ENCODE measurements at regions of chr9 and their contacts with region 1.

Region 1: DNA sequence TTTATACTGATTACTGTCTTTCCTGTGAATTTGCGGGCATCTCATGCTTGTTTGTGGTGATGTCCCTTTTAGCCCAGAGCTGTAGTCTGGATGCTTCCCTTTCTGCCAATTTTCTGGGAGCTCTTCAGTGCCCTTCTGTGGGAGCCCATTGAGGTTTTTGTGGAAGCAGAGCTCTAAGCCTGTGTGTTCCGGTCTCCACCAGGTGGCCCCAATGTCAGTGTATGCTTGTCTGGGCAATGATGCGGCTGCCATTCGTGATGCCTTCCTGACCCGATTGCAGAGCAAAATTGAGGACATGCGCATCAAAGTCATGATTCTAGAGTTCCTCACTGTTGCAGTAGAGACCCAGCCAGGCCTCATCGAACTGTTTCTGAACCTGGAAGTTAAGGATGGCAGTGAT is 35.1 kb downstream of the SH3GLB2 start:
- DNase-seq: no peak
- H3K4me3 ChIP-seq: no peak overlapping the region
- H3K27ac ChIP-seq: no peak overlapping the region
- H3K4me1 ChIP-seq: no peaks in the 10 kb centered on the region
- H3K27me3 ChIP-seq: no peaks in the 10 kb centered on the region
- CTCF ChIP-seq: peak in 1 of 5 experiments; percentile 12
- EP300 ChIP-seq: no peak
- POLR2A ChIP-seq: no peak

Region 2: GRCh38 chr9:128607642-128608350 is 385.2 kb before region 1 on chr9:
- in situ Hi-C with region 1: loop called in 1 of 4 experiments (anchors 25 kb)
- intact Hi-C with region 1: no loop called
- DNase-seq: peak; percentile 27
- H3K4me3 ChIP-seq: no peak overlapping the region
- H3K27ac ChIP-seq: peak overlapping the region in 3 of 4 donors; percentile 23 to 41 (median 33)
- H3K4me1 ChIP-seq: no peaks in the 10 kb centered on the region
- H3K27me3 ChIP-seq: no peaks in the 10 kb centered on the region
- CTCF ChIP-seq: no peak
- EP300 ChIP-seq: no peak
- POLR2A ChIP-seq: no peak

Region 3: GRCh38 chr9:128841711-128842492 is 151.1 kb before region 1 on chr9:
- in situ Hi-C with region 1: no loop called
- intact Hi-C with region 1: loop called (anchors 5 kb)
- DNase-seq: no peak
- H3K4me3 ChIP-seq: no peak overlapping the region
- H3K27ac ChIP-seq: no peak overlapping the region
- H3K4me1 ChIP-seq: no peaks in the 10 kb centered on the region
- H3K27me3 ChIP-seq: no peaks in the 10 kb centered on the region
- CTCF ChIP-seq: no peak
- EP300 ChIP-seq: no peak
- POLR2A ChIP-seq: no peak

Region 4: GRCh38 chr9:128902351-128903078 is 90.5 kb before region 1 on chr9:
- in situ Hi-C with region 1: no loop called
- intact Hi-C with region 1: no loop called
- DNase-seq: peak; percentile 86
- H3K4me3 ChIP-seq: no peak overlapping the region
- H3K27ac ChIP-seq: peak overlapping the region; percentile 65 to 83 (median 73)
- H3K4me1 ChIP-seq: peaks cover 21 to 41% (median 22%) of the 10 kb centered on the region in 4 donors
- H3K27me3 ChIP-seq: no peaks in the 10 kb centered on the region
- CTCF ChIP-seq: no peak
- EP300 ChIP-seq: no peak
- POLR2A ChIP-seq: peak; percentile 78

Region 5: DNA sequence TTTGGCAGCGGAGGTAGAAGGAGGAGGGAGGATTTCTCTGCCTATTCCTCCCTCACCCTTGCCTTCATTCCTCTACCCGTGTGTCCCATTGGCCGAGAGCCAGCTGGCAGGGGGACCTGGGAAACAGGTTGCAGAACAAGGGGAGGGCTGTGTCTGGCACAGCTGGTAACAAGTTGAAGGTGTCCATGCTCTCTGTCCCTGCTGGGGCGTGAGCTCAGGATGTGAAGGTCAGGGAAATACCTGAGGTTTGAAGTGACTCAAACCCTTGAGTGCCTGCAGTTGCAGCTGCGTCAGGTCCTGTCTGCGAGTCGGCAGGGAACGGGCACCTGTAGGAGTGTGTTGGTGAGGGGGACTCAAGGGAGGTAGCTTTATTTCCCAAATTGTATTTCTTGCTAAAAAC is 59.6 kb after region 1 on chr9:
- in situ Hi-C with region 1: no loop called
- intact Hi-C with region 1: no loop called
- DNase-seq: peak; percentile 96
- H3K4me3 ChIP-seq: no peak overlapping the region
- H3K27ac ChIP-seq: peak overlapping the region; percentile 82 to 91 (median 84)
- H3K4me1 ChIP-seq: peaks cover 0 to 17% (median 2%) of the 10 kb centered on the region in 4 donors
- H3K27me3 ChIP-seq: no peaks in the 10 kb centered on the region
- CTCF ChIP-seq: no peak
- EP300 ChIP-seq: peak; percentile 86
- POLR2A ChIP-seq: peak; percentile 61

Region 6: DNA sequence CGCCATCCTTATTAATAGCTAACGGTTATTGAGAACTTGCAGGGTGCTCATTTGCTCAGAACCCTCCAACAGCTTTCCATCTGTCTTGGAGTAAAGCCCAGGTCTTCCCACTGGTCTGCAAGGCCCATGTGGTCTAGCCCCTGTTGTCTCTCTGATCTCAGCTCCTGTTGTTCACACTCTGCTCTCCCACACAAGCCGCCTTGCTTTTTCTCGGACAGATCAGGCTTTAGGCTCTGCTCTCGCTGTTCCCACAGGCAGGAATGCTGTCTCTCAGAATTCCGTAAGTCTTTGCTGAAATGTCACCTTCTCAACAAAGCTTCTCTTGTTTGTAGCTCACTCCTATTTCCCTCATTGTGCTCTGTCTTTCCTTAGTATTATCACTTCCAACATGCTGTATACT is 1095.1 kb after region 1 on chr9:
- in situ Hi-C with region 1: no loop called
- intact Hi-C with region 1: no loop called
- DNase-seq: no peak
- H3K4me3 ChIP-seq: no peak overlapping the region
- H3K27ac ChIP-seq: no peak overlapping the region
- H3K4me1 ChIP-seq: no peaks in the 10 kb centered on the region
- H3K27me3 ChIP-seq: no peaks in the 10 kb centered on the region
- CTCF ChIP-seq: no peak
- EP300 ChIP-seq: no peak
- POLR2A ChIP-seq: no peak

Region 7: DNA sequence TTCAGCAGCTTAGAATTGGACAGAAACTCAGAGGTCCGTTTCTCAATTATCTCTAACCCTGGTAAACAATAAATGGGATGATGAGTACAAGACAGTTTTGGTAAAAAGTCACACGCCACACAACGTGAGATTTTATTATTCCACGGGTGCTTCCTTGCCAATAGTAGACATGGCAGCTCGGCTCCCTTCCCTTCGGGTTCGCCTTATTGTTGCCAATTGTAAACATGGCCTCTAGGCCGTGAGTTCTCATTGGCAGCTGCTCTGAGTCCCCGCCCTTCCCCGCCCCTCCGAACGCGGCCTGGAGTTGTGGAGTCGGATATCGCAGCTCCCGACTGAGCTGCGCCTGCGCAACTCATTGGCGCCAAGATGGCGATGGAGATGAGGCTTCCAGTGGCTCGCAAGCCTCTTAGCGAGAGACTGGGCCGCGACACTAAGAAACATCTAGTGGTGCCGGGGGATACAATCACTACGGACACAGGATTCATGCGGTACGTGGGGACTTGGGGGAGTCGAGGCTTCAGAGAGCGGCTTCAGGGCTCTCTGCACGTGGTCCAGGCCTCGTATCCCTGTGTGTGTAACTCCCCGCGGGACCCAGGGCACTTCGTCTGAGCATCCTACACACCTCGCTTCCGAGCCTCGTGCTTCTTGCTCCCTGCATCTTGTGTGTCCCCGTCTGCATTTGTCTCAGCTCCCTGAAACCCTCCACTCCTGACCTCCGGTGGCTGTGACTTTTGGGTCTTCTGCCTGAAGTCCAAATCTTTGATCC is 1700.6 kb after region 1 on chr9 and contains the start of gene EXOSC2:
- in situ Hi-C with region 1: no loop called
- intact Hi-C with region 1: no loop called
- DNase-seq: peak; percentile 99
- H3K4me3 ChIP-seq: peak within 1 kb of the TSS; percentile 51 to 93 (median 77)
- H3K27ac ChIP-seq: peak within 1 kb of the TSS; percentile 63 to 79 (median 70)
- H3K4me1 ChIP-seq: peaks cover 2 to 31% (median 25%) of the 10 kb centered on the region in 4 donors
- H3K27me3 ChIP-seq: no peaks in the 10 kb centered on the region
- CTCF ChIP-seq: no peak
- EP300 ChIP-seq: no peak
- POLR2A ChIP-seq: peak; percentile 74
- total RNA-seq, gene EXOSC2: 2.2 to 17.1 (median 15.8) TPM

Measured in transverse colon (tissue), 4 donors.